Endothelial cell of umbilical vein (primary cell): ENCODE measurements at regions of chr7 and their contacts with region 1.

Region 1: GRCh38 chr7:39051707-39052106 is 74.0 kb downstream of the POU6F2 start:
- DNase-seq: no peak
- H3K4me3 ChIP-seq: no peak overlapping the region
- H3K27ac ChIP-seq: no peak overlapping the region
- H3K4me1 ChIP-seq: no peaks in the 10 kb centered on the region
- H3K27me3 ChIP-seq: no peaks in the 10 kb centered on the region
- CTCF ChIP-seq: no peak
- POLR2A ChIP-seq: no peak

Region 2: GRCh38 chr7:38962028-38962427 is 89.7 kb before region 1 on chr7:
- CTCF ChIA-PET with region 1: no interaction called
- POLR2A ChIA-PET with region 1: no interaction called
- dilution Hi-C with region 1: no loop called
- intact Hi-C with region 1: loop called (anchors 10 kb)
- DNase-seq: no peak
- H3K4me3 ChIP-seq: no peak overlapping the region
- H3K27ac ChIP-seq: no peak overlapping the region
- H3K4me1 ChIP-seq: no peaks in the 10 kb centered on the region
- H3K27me3 ChIP-seq: peaks cover 0 to 1% of the 10 kb centered on the region in 2 experiments
- CTCF ChIP-seq: no peak
- POLR2A ChIP-seq: no peak

Region 3: GRCh38 chr7:39199006-39199405 is 147.3 kb after region 1 on chr7:
- CTCF ChIA-PET with region 1: no interaction called
- POLR2A ChIA-PET with region 1: no interaction called
- dilution Hi-C with region 1: no loop called
- intact Hi-C with region 1: no loop called
- DNase-seq: peak; percentile 2
- H3K4me3 ChIP-seq: no peak overlapping the region
- H3K27ac ChIP-seq: no peak overlapping the region
- H3K4me1 ChIP-seq: no peaks in the 10 kb centered on the region
- H3K27me3 ChIP-seq: no peaks in the 10 kb centered on the region
- CTCF ChIP-seq: no peak
- POLR2A ChIP-seq: no peak

Region 4: DNA sequence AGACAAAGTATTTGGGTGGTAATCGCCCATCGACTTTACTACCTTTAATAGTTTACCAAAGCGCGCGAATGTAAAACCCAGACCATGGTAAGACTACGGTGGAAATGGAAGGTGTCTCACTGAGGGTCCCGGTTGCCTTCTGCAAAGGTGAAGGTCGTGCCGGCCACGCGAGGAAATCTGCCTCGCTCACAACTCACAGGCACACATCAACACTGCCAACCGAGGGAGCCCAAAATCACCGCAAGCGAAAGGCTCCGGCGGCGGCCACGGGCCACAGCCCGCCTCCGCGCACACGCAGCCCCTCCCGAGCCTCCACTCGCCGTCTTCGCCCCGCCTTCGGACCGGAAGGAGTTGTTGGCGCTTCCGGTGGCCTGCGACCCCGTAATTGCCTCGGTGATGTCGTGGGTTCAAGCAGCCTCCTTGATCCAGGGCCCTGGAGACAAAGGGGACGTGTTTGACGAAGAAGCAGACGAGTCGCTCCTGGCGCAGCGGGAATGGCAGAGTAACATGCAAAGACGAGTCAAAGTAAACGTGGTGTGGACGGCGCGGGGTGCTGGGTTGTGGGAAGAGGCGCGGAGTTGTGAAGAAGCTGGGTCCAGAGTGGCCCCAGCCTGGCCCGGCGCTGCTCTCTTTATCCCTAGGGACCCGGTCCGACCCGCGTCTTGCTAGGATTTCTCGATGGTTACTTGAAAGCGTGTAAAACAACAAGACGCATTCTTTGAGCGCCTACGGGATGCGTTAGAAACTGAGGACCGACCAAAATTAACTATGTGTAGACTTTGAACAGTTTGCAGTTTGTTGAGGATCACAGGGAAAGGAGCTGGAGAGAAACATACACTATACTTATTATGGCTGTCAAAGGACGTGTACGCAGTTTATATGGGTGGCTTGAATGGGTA is 514.6 kb after region 1 on chr7 and contains the start of gene YAE1:
- CTCF ChIA-PET with region 1: no interaction called
- POLR2A ChIA-PET with region 1: no interaction called
- dilution Hi-C with region 1: no loop called
- intact Hi-C with region 1: no loop called
- DNase-seq: peak; percentile 75
- H3K4me3 ChIP-seq: peak within 1 kb of the TSS; percentile 54 to 91 (median 68)
- H3K27ac ChIP-seq: peak within 1 kb of the TSS; percentile 31
- H3K4me1 ChIP-seq: peaks cover 11% of the 10 kb centered on the region
- H3K27me3 ChIP-seq: no peaks in the 10 kb centered on the region
- CTCF ChIP-seq: no peak
- POLR2A ChIP-seq: peak; percentile 75
- total RNA-seq, gene YAE1: 20.6 and 20.7 TPM in 2 replicates